Tibial artery (tissue), 4 donors: ENCODE measurements at regions of chr12 and their contacts with region 1.

Region 1: GRCh38 chr12:93778306-93778705 is 101.1 kb downstream of the CRADD start:
- DNase-seq: peak; percentile 60 to 80
- H3K4me3 ChIP-seq: no peak overlapping the region
- H3K27ac ChIP-seq: peak overlapping the region; percentile 75 to 81
- H3K4me1 ChIP-seq: peaks cover 0 to 36% (median 28%) of the 10 kb centered on the region in 4 donors
- H3K27me3 ChIP-seq: no peaks in the 10 kb centered on the region
- CTCF ChIP-seq: peak in 1 of 2 experiments; percentile 17

Region 2: GRCh38 chr12:93742110-93742934 is 36.0 kb before region 1 on chr12:
- intact Hi-C with region 1: loop called (anchors 5 kb)
- DNase-seq: peak; percentile 76 to 82
- H3K4me3 ChIP-seq: peak overlapping the region; percentile 63 to 70
- H3K27ac ChIP-seq: peak overlapping the region; percentile 80 to 85
- H3K4me1 ChIP-seq: peaks cover 0 to 50% (median 14%) of the 10 kb centered on the region in 4 donors
- H3K27me3 ChIP-seq: no peaks in the 10 kb centered on the region
- CTCF ChIP-seq: peak; percentile 16 to 43

Region 3: DNA sequence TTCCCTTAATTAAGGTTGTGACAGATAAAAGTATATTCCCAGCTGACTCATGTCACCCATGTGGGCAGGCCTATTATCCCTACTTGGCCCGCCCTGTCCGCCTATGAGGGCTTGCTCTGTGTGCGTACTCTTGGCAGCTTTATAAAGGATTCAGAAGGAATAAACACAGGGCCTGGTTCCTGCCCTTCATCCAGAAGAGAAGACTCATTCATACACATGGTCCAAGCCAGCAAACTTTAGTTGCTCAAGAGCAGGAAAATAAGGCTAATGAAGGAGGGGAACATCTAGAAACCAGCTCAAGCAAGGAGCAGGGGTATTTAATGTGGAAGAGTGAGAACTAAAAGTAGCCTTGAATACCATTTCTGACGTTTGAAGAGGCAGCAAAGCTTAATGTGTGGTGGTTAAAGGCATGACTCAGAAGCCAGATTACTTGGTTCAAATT is 40.8 kb after region 1 on chr12:
- intact Hi-C with region 1: loop called (anchors 5 kb)
- DNase-seq: peak; percentile 72 to 78
- H3K4me3 ChIP-seq: no peak overlapping the region
- H3K27ac ChIP-seq: peak overlapping the region; percentile 3 to 44
- H3K4me1 ChIP-seq: peaks cover 0 to 29% (median 15%) of the 10 kb centered on the region in 4 donors
- H3K27me3 ChIP-seq: no peaks in the 10 kb centered on the region
- CTCF ChIP-seq: no peak

Region 4: DNA sequence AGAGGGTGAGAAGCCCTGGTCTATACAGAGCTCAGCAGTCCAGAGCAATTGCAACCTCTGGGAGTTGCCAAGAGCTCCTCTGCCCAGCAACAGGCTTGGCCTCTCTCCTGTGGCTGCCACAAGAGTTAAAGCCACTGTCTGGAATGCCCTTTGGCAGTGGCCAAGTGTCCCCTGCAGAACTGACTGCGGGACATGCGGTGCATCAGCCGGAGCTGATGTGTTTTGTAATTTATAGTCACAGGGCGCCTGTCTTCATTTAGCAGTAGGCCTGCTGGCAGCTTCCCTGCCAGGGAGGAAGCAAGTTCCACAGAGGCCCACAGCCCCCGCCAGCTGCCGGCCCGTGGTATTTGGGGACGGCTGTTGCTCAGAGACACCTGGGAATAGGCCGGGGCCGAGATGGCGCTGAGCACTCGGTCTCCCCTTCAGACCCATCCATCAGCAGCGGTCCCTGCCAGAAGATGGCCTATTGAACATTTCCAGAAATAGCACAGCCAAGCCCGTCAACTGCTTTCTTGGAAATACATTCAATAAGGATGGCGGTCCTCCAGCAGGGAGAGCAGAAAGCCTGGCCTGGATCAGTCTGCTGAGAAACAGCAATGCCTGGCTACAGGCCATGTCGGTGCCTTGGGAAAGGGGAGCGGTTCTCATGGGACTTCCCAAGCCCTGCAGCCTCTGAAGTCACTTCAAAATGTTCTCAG is 116.2 kb after region 1 on chr12:
- intact Hi-C with region 1: loop called (anchors 10 kb)
- DNase-seq: peak; percentile 82 to 93
- H3K4me3 ChIP-seq: peak overlapping the region; percentile 24 to 37
- H3K27ac ChIP-seq: peak overlapping the region; percentile 78 to 81
- H3K4me1 ChIP-seq: peaks cover 0 to 26% (median 19%) of the 10 kb centered on the region in 4 donors
- H3K27me3 ChIP-seq: no peaks in the 10 kb centered on the region
- CTCF ChIP-seq: no peak